WTC11 (cell line): ENCODE measurements at regions of chr18 and their contacts with region 1.

Region 1: GRCh38 chr18:26090130-26091046 is at the start of gene SS18:
- DNase-seq: peak; percentile 91
- ATAC-seq: peak; percentile 92
- H3K4me3 Mint-ChIP-seq: peak within 1 kb of the TSS; percentile 98
- H3K27ac Mint-ChIP-seq: peak within 1 kb of the TSS; percentile 97
- H3K4me1 Mint-ChIP-seq: peaks cover 25% of the 10 kb centered on the region
- H3K27me3 Mint-ChIP-seq: no peaks in the 10 kb centered on the region
- CTCF ChIP-seq: no peak
- total RNA-seq, gene SS18: 73.0 to 79.1 TPM (median 75.6 TPM) in 3 replicates

Region 2: GRCh38 chr18:26040051-26040656 is 50.2 kb before region 1 on chr18:
- CTCF ChIA-PET with region 1: no interaction called
- POLR2A ChIA-PET with region 1: no interaction called
- DNase-seq: no peak
- ATAC-seq: no peak
- H3K4me3 Mint-ChIP-seq: no peak overlapping the region
- H3K27ac Mint-ChIP-seq: peak overlapping the region; percentile 84; the same call in 1 of the 2 replicates
- H3K4me1 Mint-ChIP-seq: peaks cover 28% of the 10 kb centered on the region
- H3K27me3 Mint-ChIP-seq: no peaks in the 10 kb centered on the region
- CTCF ChIP-seq: no peak

Region 3: GRCh38 chr18:26370037-26370436 is 279.6 kb after region 1 on chr18:
- CTCF ChIA-PET with region 1: no interaction called
- POLR2A ChIA-PET with region 1: interaction called, 13 read pairs
- DNase-seq: no peak
- ATAC-seq: no peak
- H3K4me3 Mint-ChIP-seq: no peak overlapping the region
- H3K27ac Mint-ChIP-seq: no peak overlapping the region
- H3K4me1 Mint-ChIP-seq: peaks cover 19% of the 10 kb centered on the region
- H3K27me3 Mint-ChIP-seq: no peaks in the 10 kb centered on the region; the same call in 1 of the 2 replicates
- CTCF ChIP-seq: no peak